Brain microvascular endothelial cell (primary cell): ENCODE measurements at regions of chr7 and their contacts with region 1.

Region 1: DNA sequence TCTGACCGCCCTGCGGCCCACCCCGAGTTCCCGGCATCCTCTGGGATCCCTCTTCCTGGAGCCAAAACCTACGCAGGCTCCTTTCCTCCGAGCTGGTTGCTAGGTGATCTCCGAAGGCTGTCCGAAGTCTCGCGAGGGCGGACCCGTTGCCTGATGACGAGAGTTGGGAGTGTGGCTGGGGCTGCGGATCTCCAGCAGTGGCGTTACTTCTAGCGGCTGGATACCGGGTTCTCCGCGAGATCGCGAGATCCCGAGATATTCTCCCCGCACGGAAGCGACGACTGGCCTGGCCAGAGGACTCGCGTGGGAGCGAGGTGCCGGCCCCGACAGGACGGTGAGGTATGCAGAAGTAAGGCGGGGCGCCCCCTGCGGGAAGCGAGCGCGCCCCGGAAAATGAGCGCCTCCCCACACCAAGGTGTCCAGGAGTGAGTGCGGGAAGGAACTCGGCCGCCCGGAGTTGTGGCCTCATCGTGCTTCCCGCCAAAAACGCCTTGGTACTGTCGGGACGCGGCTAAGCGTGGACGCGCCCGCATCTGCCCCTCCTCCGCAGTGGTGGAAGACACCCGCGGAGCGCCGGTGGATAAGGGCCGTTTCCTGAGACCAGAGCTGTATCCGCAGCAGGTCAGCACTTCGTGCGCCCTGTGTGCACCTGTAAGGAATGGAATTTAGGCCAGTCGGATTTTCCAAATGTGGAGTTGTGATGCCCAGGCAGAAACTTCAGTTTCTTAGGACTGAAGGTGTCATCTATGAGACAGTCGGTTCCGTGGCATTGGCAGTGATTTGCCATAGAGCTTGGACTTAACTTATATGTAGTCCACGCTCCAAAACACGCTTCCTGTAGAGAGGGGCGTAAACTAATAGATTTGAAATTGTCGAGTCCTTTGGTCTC is at the start of gene AGBL3:
- DNase-seq: peak; percentile 97
- H3K4me3 ChIP-seq: peak within 1 kb of the TSS; percentile 81
- H3K27ac ChIP-seq: peak within 1 kb of the TSS; percentile 81
- H3K27me3 ChIP-seq: no peaks in the 10 kb centered on the region
- CTCF ChIP-seq: peak; percentile 76

Region 2: GRCh38 chr7:134804351-134804750 is 182.3 kb before region 1 on chr7:
- in situ Hi-C with region 1: no loop called
- DNase-seq: peak; percentile 28
- H3K4me3 ChIP-seq: no peak overlapping the region
- H3K27ac ChIP-seq: peak overlapping the region; percentile 76
- H3K27me3 ChIP-seq: no peaks in the 10 kb centered on the region
- CTCF ChIP-seq: no peak

Region 3: DNA sequence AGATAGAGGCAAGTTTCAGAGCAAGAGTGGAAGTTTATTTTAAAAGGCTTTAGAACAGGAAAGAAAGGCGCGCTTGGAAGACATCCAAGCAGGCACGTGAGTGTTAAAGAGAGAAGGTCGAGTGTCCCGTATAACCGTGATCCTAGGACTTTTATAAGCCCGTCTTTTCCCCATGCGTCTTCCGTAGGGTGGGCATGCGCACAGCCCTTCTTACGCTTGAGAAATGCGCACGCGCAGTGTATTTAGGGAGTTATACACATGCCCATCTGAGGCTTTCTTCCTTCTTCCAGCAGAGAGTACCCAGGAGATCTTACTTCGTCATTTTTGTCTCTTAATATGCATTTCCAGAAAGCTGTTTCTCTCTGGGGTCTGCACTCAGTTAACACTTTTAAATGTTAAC is 154.7 kb before region 1 on chr7:
- in situ Hi-C with region 1: no loop called
- DNase-seq: peak; percentile 63
- H3K4me3 ChIP-seq: no peak overlapping the region
- H3K27ac ChIP-seq: peak overlapping the region; percentile 100
- H3K27me3 ChIP-seq: no peaks in the 10 kb centered on the region
- CTCF ChIP-seq: no peak

Region 4: GRCh38 chr7:135098391-135098790 is 111.8 kb after region 1 on chr7:
- in situ Hi-C with region 1: no loop called
- DNase-seq: peak; percentile 9
- H3K4me3 ChIP-seq: no peak overlapping the region
- H3K27ac ChIP-seq: no peak overlapping the region
- H3K27me3 ChIP-seq: no peaks in the 10 kb centered on the region
- CTCF ChIP-seq: no peak

Region 5: GRCh38 chr7:135170274-135170997 is 183.8 kb after region 1 on chr7 and contains the start of gene CYREN:
- in situ Hi-C with region 1: loop called (anchors 25 kb)
- DNase-seq: peak; percentile 81
- H3K4me3 ChIP-seq: peak within 1 kb of the TSS; percentile 79
- H3K27ac ChIP-seq: peak within 1 kb of the TSS; percentile 83
- H3K27me3 ChIP-seq: no peaks in the 10 kb centered on the region
- CTCF ChIP-seq: peak; percentile 63